H1 (cell line): ENCODE measurements at regions of chr19 and their contacts with region 1.

Region 1: GRCh38 chr19:9565900-9566705 is 18.2 kb downstream of the ZNF121 start:
- DNase-seq: no peak
- H3K4me3 ChIP-seq: peak overlapping the region in 1 of 4 experiments; percentile 36; a peak in 1 of 8 replicates
- H3K27ac ChIP-seq: no peak overlapping the region
- H3K4me1 ChIP-seq: no peaks in the 10 kb centered on the region
- H3K27me3 ChIP-seq: no peaks in the 10 kb centered on the region
- CTCF ChIP-seq: no peak
- EP300 ChIP-seq: no peak
- POLR2A ChIP-seq: peak in 1 of 2 experiments; percentile 43; a peak in 1 of 3 replicates
- RAD21 ChIP-seq: no peak

Region 2: DNA sequence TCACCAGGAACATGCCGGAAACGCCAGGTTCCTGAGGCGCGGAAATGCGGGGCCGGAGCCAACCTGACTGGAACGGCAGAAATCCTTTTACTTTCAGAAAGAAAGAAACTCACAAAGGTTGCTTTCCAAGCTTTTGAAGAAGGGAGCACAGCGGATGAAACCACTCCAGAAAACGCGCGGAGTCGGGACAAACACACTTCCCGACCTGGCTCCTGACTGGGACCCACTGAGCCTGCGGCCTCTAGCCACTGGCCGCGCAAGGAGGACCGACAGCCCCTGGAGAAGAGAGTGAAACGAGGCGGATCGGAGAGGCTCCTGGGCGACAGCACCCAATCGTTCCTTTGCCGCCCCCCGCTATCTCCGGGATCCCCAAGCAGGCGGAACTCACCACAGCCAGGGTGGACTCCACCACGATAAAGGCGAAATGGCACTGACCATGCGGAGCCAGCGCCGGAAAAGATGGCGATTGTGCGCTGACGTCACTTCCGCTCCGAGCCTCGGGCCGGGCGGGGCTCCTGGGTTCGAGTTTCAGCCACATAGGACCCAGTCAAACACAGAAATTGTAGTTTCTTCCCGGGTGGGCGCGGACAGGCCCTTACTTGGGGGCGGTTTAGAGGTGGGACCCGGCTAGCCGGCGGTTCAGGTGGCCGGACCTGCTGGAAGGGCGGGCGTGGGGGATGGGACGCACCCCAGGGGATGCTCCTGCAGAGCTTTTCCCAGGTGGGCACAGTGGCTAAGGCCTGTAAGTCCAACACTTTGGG is 18.1 kb after region 1 on chr19 and contains the start of gene ZNF121:
- CTCF ChIA-PET with region 1: interaction called, 4 read pairs
- POLR2A ChIA-PET with region 1: interaction called, 27 read pairs
- DNase-seq: peak; percentile 56 to 96
- H3K4me3 ChIP-seq: peak within 1 kb of the TSS; percentile 76 to 99 (median 89)
- H3K27ac ChIP-seq: peak within 1 kb of the TSS; percentile 96
- H3K4me1 ChIP-seq: peaks cover 0 to 6% (median 3%) of the 10 kb centered on the region in 4 experiments; a peak in 5 of 7 replicates
- H3K27me3 ChIP-seq: no peaks in the 10 kb centered on the region
- CTCF ChIP-seq: no peak
- EP300 ChIP-seq: no peak
- POLR2A ChIP-seq: peak; percentile 96 to 99
- RAD21 ChIP-seq: no peak
- total RNA-seq, gene ZNF121: 194 and 220 TPM in 2 replicates